Activated CD8-positive, alpha-beta memory T cell treated with anti-CD3 and anti-CD28 coated beads, Interleukin-2, amount 10 ng/mL, durations not matched to agents 7 days and 5 days (primary cell): ENCODE measurements at regions of chr6 and their contacts with region 1.

Region 1: GRCh38 chr6:132483779-132484679 is 28.9 kb downstream of the STX7 start:
- DNase-seq: no peak
- ATAC-seq: peak; percentile 71
- H3K4me3 Mint-ChIP-seq: no peak overlapping the region
- H3K27ac Mint-ChIP-seq: no peak overlapping the region
- H3K4me1 Mint-ChIP-seq: peaks cover 15% of the 10 kb centered on the region
- H3K27me3 Mint-ChIP-seq: no peaks in the 10 kb centered on the region

Region 2: DNA sequence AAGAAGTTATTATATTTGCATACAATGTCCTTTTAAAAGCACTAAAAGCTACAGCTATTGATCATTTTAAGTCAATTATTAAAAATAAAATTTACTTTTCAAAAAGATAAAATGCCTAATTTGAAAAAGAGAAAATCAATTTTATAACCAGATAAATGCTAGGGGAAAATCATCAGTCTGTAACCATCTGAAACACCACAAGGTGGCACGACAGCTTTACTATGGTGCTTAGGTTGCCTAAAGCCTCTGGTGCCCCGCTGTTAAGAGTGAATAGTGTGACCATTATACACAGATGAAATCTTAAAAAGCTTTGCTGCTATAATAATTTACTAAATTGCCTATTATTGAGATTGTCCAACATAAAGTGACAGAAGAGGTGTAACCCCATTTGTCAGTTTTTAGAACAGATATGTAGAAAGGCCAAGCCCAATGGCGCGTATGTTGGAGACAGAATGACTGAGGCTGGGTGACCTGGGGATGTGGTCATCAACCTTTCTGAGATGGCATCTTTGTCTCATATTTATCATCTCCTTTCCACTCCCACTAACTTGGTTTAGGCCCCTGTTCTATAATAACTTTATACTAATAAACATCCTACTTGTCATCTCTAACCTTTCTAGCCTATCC is 183.6 kb before region 1 on chr6:
- CTCF ChIA-PET with region 1: interaction called, 11 read pairs
- DNase-seq: no peak
- ATAC-seq: no peak
- H3K4me3 Mint-ChIP-seq: no peak overlapping the region
- H3K27ac Mint-ChIP-seq: no peak overlapping the region
- H3K4me1 Mint-ChIP-seq: no peaks in the 10 kb centered on the region
- H3K27me3 Mint-ChIP-seq: peaks cover 21% of the 10 kb centered on the region

Region 3: GRCh38 chr6:132471788-132472187 is 12.2 kb before region 1 on chr6:
- CTCF ChIA-PET with region 1: interaction called, 36 read pairs
- DNase-seq: no peak
- ATAC-seq: no peak
- H3K4me3 Mint-ChIP-seq: no peak overlapping the region
- H3K27ac Mint-ChIP-seq: no peak overlapping the region
- H3K4me1 Mint-ChIP-seq: no peaks in the 10 kb centered on the region
- H3K27me3 Mint-ChIP-seq: no peaks in the 10 kb centered on the region

Region 4: DNA sequence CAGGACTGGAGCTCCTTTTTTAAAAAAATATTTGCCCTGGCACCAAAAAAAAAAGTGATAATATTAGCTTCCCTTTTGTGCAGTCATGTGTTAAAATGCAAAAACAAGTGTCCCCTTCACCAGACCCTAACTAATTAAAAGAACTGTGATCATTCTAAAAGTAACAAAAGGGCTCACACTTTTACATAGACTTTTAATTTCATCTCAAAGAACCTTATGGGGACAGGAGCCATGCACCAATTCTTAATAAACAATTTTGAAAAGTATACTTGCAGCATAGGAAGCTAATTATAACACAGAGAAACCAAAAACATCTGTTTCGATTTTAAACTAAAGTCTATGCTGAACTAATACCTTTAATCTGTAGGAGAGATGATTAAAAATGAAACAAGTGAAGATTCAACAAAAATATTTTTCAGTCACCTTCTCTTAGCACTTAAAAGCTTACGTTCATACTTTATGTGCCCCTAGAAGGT is 11.6 kb after region 1 on chr6:
- CTCF ChIA-PET with region 1: interaction called, 34 read pairs
- DNase-seq: no peak
- ATAC-seq: peak; percentile 48
- H3K4me3 Mint-ChIP-seq: no peak overlapping the region
- H3K27ac Mint-ChIP-seq: peak overlapping the region; percentile 61
- H3K4me1 Mint-ChIP-seq: peaks cover 30% of the 10 kb centered on the region
- H3K27me3 Mint-ChIP-seq: no peaks in the 10 kb centered on the region

Region 5: GRCh38 chr6:132512638-132513632 is 28.9 kb after region 1 on chr6 and contains the start of gene STX7:
- CTCF ChIA-PET with region 1: interaction called, 10 read pairs
- DNase-seq: peak; percentile 91
- ATAC-seq: peak; percentile 97
- H3K4me3 Mint-ChIP-seq: peak within 1 kb of the TSS; percentile 92
- H3K27ac Mint-ChIP-seq: peak within 1 kb of the TSS; percentile 87
- H3K4me1 Mint-ChIP-seq: peaks cover 26% of the 10 kb centered on the region
- H3K27me3 Mint-ChIP-seq: peaks cover 10% of the 10 kb centered on the region
- total RNA-seq, gene STX7: 17.2 to 19.5 TPM